ENCODE measurements at regions of chr17 and their contacts with region 1.

Region 1: DNA sequence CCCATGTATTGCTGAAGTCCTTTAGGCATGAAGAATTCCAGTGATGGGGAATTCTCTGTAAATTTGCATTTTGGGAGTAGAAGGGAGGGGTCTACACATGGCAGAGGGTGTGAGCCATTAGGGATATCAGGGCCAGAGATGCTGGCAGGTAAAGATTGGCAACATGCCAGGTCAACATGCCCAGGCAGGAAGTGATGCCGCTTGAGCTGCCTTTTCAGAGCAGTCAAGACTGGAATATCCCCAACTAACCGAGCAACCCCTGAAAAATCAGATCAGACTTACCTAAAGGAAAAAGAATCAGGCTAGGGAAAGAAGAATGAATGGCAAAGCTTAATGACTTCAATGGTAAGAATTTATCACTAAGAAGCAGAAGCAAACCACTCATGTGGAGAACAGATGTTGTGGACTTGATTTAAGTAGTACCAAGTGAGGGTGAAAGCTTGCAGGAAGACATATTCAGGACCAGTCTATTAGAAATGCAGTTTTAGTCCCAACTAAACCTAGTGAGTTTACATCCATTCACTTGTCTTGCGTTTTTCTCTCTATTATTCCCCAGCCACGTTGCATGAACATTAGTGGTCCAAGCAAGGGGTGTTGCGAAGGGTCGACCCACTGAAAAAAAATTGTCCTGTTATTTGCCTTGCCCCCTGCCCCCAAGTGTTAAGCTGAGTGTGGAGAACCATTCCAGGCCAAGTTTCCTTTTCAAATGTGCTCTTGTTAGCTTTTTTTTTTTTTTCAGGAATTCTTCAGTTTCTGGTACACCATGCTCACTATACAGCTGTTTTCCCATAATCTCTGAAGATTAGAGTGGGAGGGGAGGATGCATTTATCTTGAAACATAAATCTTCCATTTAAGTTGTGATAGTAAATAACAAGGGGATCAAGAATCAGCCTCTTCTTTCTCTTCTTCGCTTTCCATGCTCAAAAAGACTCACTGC is 105.2 kb downstream of the ABCA8 start:
- DNase-seq: no peak
- ATAC-seq: no peak

Region 2: DNA sequence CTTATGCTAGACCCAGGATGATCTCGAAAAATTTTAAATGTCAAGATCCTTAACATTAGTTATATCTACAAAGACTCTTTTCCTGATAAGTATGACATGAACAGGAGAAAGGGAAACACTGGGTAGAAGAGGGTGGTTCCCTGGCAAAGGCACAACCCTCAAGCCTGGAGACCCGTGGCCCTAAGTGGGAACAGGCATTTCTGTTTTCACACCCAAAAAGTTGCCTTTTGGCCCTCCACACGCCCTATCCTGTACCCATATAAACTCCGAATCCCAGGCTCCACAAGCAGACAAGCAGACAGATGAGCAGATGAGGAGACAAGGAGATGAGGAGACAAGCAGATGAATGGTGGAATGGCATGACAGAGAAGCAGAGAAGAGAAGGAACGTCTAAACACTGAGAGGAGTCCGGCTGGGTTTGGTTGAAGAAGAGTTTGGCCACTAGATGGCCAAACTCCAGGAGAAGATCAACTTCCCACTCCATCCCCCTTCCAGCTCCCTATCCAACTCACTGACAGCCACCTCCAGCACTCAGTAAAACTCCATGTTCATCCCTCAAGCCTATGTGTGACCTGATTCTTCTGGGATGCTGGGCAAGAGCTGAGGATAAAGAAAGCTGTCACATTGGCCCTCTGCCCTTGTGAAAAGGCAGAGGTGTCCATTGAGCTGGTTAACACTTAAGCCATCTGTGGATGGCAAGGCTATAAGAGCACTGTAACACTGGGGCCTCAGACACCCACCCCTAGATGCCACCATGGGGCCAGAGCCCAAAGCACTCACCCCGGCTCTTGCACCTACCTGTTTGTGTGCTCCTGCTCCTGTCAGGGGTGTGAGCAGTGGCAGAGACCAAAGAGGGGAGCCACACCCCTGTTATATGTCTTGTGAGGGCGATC is 109.1 kb before region 1 on chr17:
- intact Hi-C with region 1: no loop called
- DNase-seq: no peak
- ATAC-seq: no peak

Region 3: DNA sequence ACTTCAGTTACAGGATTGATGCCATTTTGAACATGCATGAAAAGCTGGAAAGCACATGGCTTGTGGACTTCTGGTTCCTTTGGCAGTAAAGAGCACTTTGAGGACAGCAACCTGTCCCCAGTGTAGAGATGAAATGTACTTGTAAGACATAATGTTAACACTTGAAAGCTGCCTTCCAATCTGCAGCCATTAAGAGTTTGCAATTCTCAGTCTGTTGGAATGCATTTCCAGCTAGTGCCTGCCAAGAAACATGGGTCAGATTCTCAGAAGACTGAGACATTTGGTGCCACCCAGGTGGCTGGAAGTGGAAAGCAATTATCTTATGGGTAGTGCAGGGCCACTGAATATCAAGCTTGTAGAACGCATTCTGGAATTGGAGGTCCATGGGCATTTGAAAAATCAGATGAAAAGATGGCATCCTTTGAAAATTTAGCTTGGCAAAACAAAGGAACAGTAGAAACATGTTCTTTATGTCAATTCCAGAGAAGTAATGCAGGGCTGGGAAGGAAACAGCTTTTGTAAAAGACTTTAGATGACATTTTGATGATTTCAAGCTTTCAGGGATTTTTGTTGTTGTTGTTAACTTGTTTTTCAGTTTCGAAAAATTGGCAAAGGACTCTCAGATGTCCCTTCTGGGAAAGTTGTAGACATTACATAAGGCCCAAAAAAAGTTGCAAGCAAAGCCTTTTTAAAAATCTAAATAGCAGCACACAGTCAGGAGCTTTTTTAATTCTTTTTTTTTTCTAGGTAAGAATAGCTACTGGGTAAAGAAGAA is 41.8 kb before region 1 on chr17:
- intact Hi-C with region 1: loop called (anchors 10 kb)
- DNase-seq: no peak
- ATAC-seq: peak; percentile 83

Region 4: GRCh38 chr17:68981288-68981687 is 131.3 kb after region 1 on chr17:
- intact Hi-C with region 1: no loop called
- DNase-seq: no peak
- ATAC-seq: peak; percentile 59

Measured in Right ventricle myocardium inferior (tissue), 1 donor.